ENCODE measurements at regions of chr11 and their contacts with region 1.

Region 1: DNA sequence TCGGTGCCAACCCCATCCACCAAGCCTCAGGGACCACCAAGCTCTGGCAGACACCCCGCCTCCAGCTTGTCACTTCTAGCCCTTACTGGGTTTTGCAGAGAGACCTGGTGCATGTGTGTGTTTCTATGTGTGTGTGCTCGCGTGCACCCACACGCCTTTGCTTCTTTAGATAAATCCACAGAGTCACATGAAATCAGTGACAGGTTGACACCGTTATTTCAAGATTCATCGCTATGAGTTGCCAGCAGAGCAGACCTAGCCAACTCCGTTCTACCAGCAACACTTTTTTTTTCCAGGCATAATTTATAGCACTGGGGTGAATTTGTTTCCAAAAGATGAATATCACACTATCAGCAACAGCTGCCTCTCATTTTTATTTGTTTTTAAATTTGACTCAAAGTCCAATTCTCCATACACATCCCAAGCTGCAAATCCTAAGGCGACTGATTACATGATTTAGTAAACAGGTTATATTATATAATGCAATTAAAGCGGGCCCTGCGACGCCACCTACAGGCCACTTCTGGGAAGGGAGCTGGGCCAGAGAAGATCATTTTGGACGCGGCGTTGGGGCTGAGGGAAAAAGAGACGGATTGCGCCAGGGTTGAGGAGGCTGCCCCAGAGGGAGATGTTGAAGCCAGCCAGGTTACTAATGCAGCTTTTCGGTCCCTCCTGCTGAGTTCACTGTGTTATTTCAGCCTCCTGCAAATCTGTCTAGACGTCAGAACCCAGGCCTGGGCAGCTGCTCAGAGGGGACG is 150.5 kb downstream of the FEZ1 start:
- DNase-seq: peak; percentile 70
- ATAC-seq: peak; percentile 69
- H3K4me3 Mint-ChIP-seq: no peak overlapping the region
- H3K27ac Mint-ChIP-seq: no peak overlapping the region
- H3K4me1 Mint-ChIP-seq: no peaks in the 10 kb centered on the region
- H3K27me3 Mint-ChIP-seq: peaks cover 6% of the 10 kb centered on the region

Region 2: DNA sequence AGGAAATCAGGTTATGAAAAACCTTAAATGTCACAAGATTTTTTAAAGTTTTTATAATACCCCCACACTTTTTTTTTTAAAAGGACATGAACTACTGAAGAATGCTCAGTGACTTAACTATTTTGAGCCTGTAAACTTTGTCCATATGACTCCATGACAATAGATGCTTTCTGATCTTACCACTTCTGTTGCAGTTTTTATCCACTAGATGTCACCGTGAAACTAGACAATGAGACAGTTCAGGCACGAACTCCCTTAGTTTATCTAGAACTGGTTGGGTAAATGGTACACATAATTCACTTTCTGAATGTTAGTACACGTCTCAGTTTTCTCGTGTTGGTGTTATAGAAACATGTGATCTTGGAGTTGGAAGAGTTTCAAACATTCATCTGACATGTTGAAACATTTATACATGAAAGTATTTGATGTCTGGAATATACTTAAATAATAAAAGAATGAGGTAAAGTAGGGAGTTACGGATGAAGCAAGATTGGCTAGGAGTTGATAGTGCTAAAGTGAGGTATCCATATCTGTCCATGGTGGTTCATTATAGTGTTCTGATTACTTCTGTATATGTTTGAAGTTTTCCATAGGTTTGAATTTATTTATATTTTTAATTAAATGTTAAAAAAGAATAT is 383.5 kb before region 1 on chr11:
- CTCF ChIA-PET with region 1: interaction called, 3 read pairs
- POLR2A ChIA-PET with region 1: no interaction called
- intact Hi-C with region 1: loop called (anchors 1 to 2 kb)
- DNase-seq: no peak
- ATAC-seq: peak; percentile 98
- H3K4me3 Mint-ChIP-seq: no peak overlapping the region
- H3K27ac Mint-ChIP-seq: no peak overlapping the region
- H3K4me1 Mint-ChIP-seq: no peaks in the 10 kb centered on the region
- H3K27me3 Mint-ChIP-seq: no peaks in the 10 kb centered on the region

Region 3: GRCh38 chr11:125091247-125091876 is 254.2 kb before region 1 on chr11:
- CTCF ChIA-PET with region 1: no interaction called
- POLR2A ChIA-PET with region 1: no interaction called
- intact Hi-C with region 1: loop called in 1 of 2 experiments (anchors 5 kb)
- DNase-seq: no peak
- ATAC-seq: peak; percentile 49
- H3K4me3 Mint-ChIP-seq: no peak overlapping the region
- H3K27ac Mint-ChIP-seq: no peak overlapping the region
- H3K4me1 Mint-ChIP-seq: peaks cover 3% of the 10 kb centered on the region
- H3K27me3 Mint-ChIP-seq: no peaks in the 10 kb centered on the region

Region 4: DNA sequence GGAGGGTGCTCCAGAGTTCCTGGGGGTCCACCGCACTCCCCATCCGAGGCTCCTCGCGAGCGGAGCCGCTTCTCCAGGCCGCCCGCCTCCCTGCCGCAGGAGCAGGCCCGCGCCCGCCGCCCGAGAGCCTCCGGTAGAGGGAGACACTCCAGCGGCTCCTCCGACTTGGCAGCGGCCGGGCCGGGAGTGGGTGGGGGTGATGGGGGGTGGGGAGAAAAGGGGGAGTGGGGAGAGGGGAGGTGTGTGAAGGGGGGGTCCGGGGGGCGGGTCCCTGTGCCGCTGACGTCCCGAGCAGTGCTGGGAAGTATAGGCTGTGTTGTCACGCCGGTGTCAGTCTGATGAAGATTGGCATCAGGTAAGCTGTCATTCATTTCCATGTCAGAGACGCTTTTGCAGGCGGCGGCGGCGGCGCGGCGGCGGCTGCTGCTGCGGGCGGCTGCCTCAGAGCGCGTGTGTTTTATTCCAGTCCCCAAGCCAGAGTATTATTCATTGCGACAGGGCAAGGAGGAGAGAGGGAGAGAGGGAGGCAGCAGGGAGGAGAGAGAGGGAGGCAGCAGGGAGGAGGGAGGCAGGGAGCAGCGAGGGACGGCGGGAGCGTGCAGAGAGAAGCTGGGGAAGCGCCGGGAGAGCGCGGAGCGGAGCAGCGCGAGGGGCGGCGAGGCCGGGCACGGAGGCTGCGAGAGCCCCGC is 181.0 kb before region 1 on chr11 and contains the start of gene PKNOX2:
- CTCF ChIA-PET with region 1: interaction called, 3 read pairs
- POLR2A ChIA-PET with region 1: no interaction called
- intact Hi-C with region 1: loop called (anchors 1 to 5 kb)
- DNase-seq: peak; percentile 83
- ATAC-seq: peak; percentile 85
- H3K4me3 Mint-ChIP-seq: peak within 1 kb of the TSS; percentile 77
- H3K27ac Mint-ChIP-seq: peak within 1 kb of the TSS; percentile 51
- H3K4me1 Mint-ChIP-seq: peaks cover 18% of the 10 kb centered on the region
- H3K27me3 Mint-ChIP-seq: peaks cover 53% of the 10 kb centered on the region
- total RNA-seq, gene PKNOX2: not detected

Region 5: DNA sequence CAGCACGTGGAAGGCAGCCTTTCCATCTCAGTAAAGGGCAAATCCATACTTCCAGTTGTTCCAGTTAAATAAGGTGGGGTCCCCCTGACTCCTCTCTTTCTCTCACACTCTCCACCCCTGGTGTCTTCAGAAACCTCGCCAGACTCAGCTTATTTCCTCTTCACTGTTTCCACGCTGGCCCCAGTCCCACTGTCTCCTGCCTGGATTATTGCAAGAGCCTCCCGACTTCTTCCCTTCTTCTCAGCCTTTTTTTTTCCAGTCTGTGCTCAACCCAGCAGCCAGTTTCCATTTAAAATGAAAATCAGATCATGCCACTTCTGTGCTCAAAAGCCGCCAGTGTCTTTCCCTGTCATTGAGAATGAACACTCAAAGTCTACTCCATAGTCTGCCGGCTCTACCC is 49.7 kb before region 1 on chr11:
- CTCF ChIA-PET with region 1: no interaction called
- POLR2A ChIA-PET with region 1: no interaction called
- intact Hi-C with region 1: no loop called
- DNase-seq: no peak
- ATAC-seq: no peak
- H3K4me3 Mint-ChIP-seq: no peak overlapping the region
- H3K27ac Mint-ChIP-seq: no peak overlapping the region
- H3K4me1 Mint-ChIP-seq: no peaks in the 10 kb centered on the region
- H3K27me3 Mint-ChIP-seq: peaks cover 7% of the 10 kb centered on the region

Region 6: DNA sequence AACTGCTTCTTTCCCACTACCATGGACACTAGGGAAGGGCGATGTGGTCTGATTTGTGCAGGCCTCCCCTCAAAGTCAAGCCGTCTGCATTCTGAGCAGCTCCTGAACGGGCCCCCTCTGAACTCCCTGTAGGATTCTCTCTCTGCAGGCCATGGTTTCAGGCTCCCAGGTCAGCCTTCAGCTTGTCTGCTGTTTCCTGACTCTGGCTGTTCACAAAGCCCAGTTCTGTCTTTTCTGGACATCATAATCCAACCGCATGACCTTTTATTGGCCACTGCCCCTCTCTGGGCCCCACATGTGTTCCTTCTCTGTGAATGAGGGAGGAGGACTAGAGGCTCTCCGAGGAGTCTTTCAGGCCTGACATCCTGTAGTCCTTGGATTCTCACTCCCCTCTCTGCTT is 10.5 kb before region 1 on chr11:
- CTCF ChIA-PET with region 1: interaction called, 38 read pairs
- POLR2A ChIA-PET with region 1: no interaction called
- intact Hi-C with region 1: no loop called
- DNase-seq: no peak
- ATAC-seq: no peak
- H3K4me3 Mint-ChIP-seq: no peak overlapping the region
- H3K27ac Mint-ChIP-seq: no peak overlapping the region
- H3K4me1 Mint-ChIP-seq: no peaks in the 10 kb centered on the region
- H3K27me3 Mint-ChIP-seq: peaks cover 5% of the 10 kb centered on the region

Region 7: DNA sequence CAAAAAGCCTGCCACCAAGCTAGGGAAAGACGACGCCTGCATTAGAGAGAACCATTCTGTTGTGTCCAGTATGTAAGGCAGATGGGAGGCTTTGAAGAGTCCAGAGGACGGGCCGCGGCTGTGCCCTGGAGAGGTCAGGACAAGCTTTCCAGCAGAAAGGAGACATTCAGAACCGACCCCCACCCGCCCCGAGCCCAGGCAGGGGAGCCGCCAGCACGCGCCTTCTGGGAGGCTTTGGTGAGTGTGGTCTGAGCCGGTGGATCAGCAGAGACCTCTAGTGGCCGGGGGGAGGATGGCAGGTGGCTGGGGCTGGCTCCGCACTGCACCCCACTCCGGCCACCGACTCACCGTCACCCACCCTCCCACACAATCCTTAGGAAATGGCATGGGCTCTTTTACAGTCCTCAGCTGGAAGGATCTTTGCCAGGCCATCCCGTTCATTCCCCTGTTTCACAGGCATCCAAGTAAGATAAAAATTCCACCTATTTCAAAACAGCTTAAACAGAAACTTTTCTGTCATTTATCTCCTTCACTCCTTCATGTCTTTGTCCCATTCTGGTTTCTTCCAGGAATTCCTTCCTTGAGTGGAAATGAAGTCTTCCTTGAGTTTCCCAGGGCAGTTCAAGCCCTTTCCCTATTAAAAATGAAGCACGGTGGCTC is 59.3 kb after region 1 on chr11:
- CTCF ChIA-PET with region 1: interaction called, 4 read pairs
- POLR2A ChIA-PET with region 1: interaction called, 4 read pairs
- intact Hi-C with region 1: loop called in 1 of 2 experiments (anchors 2 kb)
- DNase-seq: peak; percentile 83
- ATAC-seq: peak; percentile 96
- H3K4me3 Mint-ChIP-seq: no peak overlapping the region
- H3K27ac Mint-ChIP-seq: no peak overlapping the region
- H3K4me1 Mint-ChIP-seq: peaks cover 2% of the 10 kb centered on the region
- H3K27me3 Mint-ChIP-seq: peaks cover 55% of the 10 kb centered on the region